ENCODE measurements at regions of chr6 and their contacts with region 1.

Region 1: GRCh38 chr6:51959744-51960383 is 127.5 kb downstream of the PKHD1 start:
- DNase-seq: peak; percentile 38
- ATAC-seq: peak; percentile 97
- H3K4me3 ChIP-seq: no peak overlapping the region
- H3K27ac ChIP-seq: no peak overlapping the region
- H3K4me1 ChIP-seq: no peaks in the 10 kb centered on the region
- H3K27me3 ChIP-seq: peaks cover 0 to 6% of the 10 kb centered on the region in 2 experiments; a peak in 1 of 4 replicates
- CTCF ChIP-seq: peak; percentile 85 to 93 (median 85)
- EP300 ChIP-seq: no peak
- POLR2A ChIP-seq: no peak
- RAD21 ChIP-seq: peak; percentile 100

Region 2: DNA sequence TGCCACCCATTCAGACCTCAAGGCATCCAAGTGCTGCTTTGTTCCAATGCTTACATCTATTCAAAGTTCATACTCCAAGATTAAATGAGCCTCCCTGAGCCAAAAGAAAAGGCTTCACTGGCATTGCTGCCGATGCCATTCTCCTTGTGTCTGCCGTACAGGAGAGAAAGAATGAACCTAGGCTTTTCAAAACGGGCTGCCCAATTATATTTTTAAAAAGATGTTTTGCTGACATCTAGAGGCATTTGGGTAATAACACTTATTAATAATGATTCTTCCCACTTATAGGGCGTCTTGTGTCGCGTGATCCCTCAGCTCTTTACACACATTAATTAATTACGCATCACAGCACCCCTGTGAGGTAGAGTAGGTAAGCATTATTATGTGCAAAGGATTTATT is 418.0 kb before region 1 on chr6:
- CTCF ChIA-PET with region 1: interaction called, 5 read pairs
- POLR2A ChIA-PET with region 1: no interaction called
- RAD21 ChIA-PET with region 1: no interaction called
- SMC1A ChIA-PET with region 1: no interaction called
- in situ Hi-C with region 1: no loop called
- intact Hi-C with region 1: loop called (anchors 10 kb)
- DNase-seq: no peak
- ATAC-seq: peak; percentile 59
- H3K4me3 ChIP-seq: no peak overlapping the region
- H3K27ac ChIP-seq: no peak overlapping the region
- H3K4me1 ChIP-seq: no peaks in the 10 kb centered on the region
- H3K27me3 ChIP-seq: no peaks in the 10 kb centered on the region
- CTCF ChIP-seq: peak in 1 of 3 experiments; percentile 41; a peak in 2 of 6 replicates
- EP300 ChIP-seq: no peak
- POLR2A ChIP-seq: no peak
- RAD21 ChIP-seq: peak; percentile 37

Region 3: GRCh38 chr6:51868591-51869355 is 91.1 kb before region 1 on chr6:
- CTCF ChIA-PET with region 1: interaction called, 15 read pairs
- POLR2A ChIA-PET with region 1: no interaction called
- RAD21 ChIA-PET with region 1: interaction called, 4 read pairs
- SMC1A ChIA-PET with region 1: interaction called, 5 read pairs
- in situ Hi-C with region 1: no loop called
- intact Hi-C with region 1: no loop called
- DNase-seq: no peak
- ATAC-seq: peak; percentile 83
- H3K4me3 ChIP-seq: no peak overlapping the region
- H3K27ac ChIP-seq: no peak overlapping the region
- H3K4me1 ChIP-seq: no peaks in the 10 kb centered on the region
- H3K27me3 ChIP-seq: peaks cover 0 to 7% of the 10 kb centered on the region in 2 experiments; a peak in 1 of 4 replicates
- CTCF ChIP-seq: no peak
- EP300 ChIP-seq: no peak
- POLR2A ChIP-seq: no peak
- RAD21 ChIP-seq: no peak

Region 4: GRCh38 chr6:51934098-51934497 is 25.8 kb before region 1 on chr6:
- CTCF ChIA-PET with region 1: interaction called, 16 read pairs
- POLR2A ChIA-PET with region 1: no interaction called
- RAD21 ChIA-PET with region 1: interaction called, 3 read pairs
- SMC1A ChIA-PET with region 1: interaction called, 10 read pairs
- in situ Hi-C with region 1: no loop called
- intact Hi-C with region 1: loop called (anchors 2 kb)
- DNase-seq: no peak
- ATAC-seq: peak; percentile 81
- H3K4me3 ChIP-seq: no peak overlapping the region
- H3K27ac ChIP-seq: no peak overlapping the region
- H3K4me1 ChIP-seq: peaks cover 6% of the 10 kb centered on the region
- H3K27me3 ChIP-seq: no peaks in the 10 kb centered on the region
- CTCF ChIP-seq: peak; percentile 21 to 64 (median 58); a peak in 5 of 6 replicates
- EP300 ChIP-seq: no peak
- POLR2A ChIP-seq: no peak
- RAD21 ChIP-seq: peak; percentile 49

Region 5: GRCh38 chr6:51996296-51996947 is 36.6 kb after region 1 on chr6:
- CTCF ChIA-PET with region 1: interaction called, 8 read pairs
- POLR2A ChIA-PET with region 1: no interaction called
- RAD21 ChIA-PET with region 1: interaction called, 6 read pairs
- SMC1A ChIA-PET with region 1: interaction called, 17 read pairs
- in situ Hi-C with region 1: no loop called
- intact Hi-C with region 1: no loop called
- DNase-seq: peak; percentile 72
- ATAC-seq: peak; percentile 95
- H3K4me3 ChIP-seq: 0 out of 2 replicates have a peak overlapping the region, but pooled peaks have one; percentile 3
- H3K27ac ChIP-seq: peak overlapping the region; percentile 64
- H3K4me1 ChIP-seq: peaks cover 14% of the 10 kb centered on the region
- H3K27me3 ChIP-seq: no peaks in the 10 kb centered on the region
- CTCF ChIP-seq: no peak
- EP300 ChIP-seq: peak in 1 of 2 experiments; percentile 60; a peak in 1 of 4 replicates
- POLR2A ChIP-seq: no peak
- RAD21 ChIP-seq: no peak

Region 6: DNA sequence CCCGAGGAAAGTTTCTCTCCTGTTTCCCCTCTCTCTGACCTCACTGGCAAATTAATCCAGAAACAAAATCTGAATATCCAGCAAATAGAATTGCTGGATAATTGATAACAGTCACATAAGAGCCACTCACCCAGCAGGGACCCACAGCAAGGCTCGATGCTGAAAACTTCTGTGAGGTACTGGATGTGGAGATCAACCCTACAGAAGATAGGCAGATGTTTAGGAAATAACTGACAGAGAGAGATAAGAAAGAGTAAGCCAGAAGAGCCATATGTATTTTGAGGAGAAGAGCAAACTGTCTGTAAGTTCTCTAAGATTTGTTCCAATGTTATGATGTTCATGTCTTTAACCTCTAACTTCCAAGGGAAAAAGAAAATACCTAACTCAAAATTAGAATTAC is 67.8 kb after region 1 on chr6:
- CTCF ChIA-PET with region 1: interaction called, 121 read pairs
- POLR2A ChIA-PET with region 1: no interaction called
- RAD21 ChIA-PET with region 1: interaction called, 14 read pairs
- SMC1A ChIA-PET with region 1: interaction called, 25 read pairs
- in situ Hi-C with region 1: no loop called
- intact Hi-C with region 1: no loop called
- DNase-seq: no peak
- ATAC-seq: no peak
- H3K4me3 ChIP-seq: no peak overlapping the region
- H3K27ac ChIP-seq: no peak overlapping the region
- H3K4me1 ChIP-seq: no peaks in the 10 kb centered on the region
- H3K27me3 ChIP-seq: no peaks in the 10 kb centered on the region; a peak in 2 of 4 replicates
- CTCF ChIP-seq: no peak
- EP300 ChIP-seq: no peak
- POLR2A ChIP-seq: no peak
- RAD21 ChIP-seq: no peak

Region 7: GRCh38 chr6:52207066-52207465 is 247.2 kb after region 1 on chr6:
- CTCF ChIA-PET with region 1: no interaction called
- POLR2A ChIA-PET with region 1: no interaction called
- RAD21 ChIA-PET with region 1: no interaction called
- SMC1A ChIA-PET with region 1: no interaction called
- in situ Hi-C with region 1: no loop called
- intact Hi-C with region 1: no loop called
- DNase-seq: no peak
- ATAC-seq: no peak
- H3K4me3 ChIP-seq: no peak overlapping the region
- H3K27ac ChIP-seq: no peak overlapping the region
- H3K4me1 ChIP-seq: peaks cover 7% of the 10 kb centered on the region
- H3K27me3 ChIP-seq: no peaks in the 10 kb centered on the region
- CTCF ChIP-seq: peak in 2 of 3 experiments; percentile 17 to 23; a peak in 1 of 6 replicates
- EP300 ChIP-seq: no peak
- POLR2A ChIP-seq: no peak
- RAD21 ChIP-seq: 0 out of 2 replicates have a peak, but pooled peaks have one; percentile 36